ENCODE measurements at regions of chr3 and their contacts with region 1.

Region 1: GRCh38 chr3:50272911-50273693 is 4.2 kb downstream of the SEMA3B start:
- DNase-seq: peak; percentile 96
- ATAC-seq: peak; percentile 76

Region 2: DNA sequence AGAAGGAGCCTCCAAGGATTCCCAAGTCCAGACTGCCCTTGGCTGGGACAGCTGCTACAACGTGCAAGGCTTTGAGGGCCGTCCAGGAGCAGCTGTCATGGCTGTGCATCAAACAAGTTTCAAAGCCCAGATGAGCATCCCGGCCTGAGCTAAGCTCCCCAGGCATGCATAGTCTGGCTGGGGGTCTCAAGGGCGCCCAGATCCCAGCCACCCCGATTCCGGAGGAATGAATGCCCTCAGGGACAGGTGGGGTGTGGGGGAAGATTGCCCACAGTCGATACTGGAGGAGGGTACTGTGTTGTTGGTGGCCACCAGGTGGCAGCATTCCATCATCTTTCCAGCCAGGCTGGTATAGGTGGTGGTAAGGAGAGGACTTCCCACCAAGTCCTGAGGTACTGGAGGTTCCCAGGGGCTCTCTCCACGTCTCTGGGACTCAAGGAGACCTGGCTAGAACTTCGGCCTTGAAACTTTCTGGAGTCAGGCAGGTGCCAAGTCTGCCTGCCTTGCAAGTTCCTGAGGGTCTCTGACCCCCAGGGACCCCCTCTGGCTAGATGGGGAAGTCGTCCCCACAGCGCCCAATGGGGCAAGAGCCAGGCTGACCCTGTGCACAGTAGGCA is 151.6 kb before region 1 on chr3:
- intact Hi-C with region 1: loop called (anchors 5 kb)
- DNase-seq: no peak
- ATAC-seq: peak; percentile 86

Region 3: GRCh38 chr3:50194128-50194902 is 78.8 kb before region 1 on chr3:
- intact Hi-C with region 1: loop called (anchors 1 kb)
- DNase-seq: peak; percentile 73
- ATAC-seq: peak; percentile 76

Region 4: DNA sequence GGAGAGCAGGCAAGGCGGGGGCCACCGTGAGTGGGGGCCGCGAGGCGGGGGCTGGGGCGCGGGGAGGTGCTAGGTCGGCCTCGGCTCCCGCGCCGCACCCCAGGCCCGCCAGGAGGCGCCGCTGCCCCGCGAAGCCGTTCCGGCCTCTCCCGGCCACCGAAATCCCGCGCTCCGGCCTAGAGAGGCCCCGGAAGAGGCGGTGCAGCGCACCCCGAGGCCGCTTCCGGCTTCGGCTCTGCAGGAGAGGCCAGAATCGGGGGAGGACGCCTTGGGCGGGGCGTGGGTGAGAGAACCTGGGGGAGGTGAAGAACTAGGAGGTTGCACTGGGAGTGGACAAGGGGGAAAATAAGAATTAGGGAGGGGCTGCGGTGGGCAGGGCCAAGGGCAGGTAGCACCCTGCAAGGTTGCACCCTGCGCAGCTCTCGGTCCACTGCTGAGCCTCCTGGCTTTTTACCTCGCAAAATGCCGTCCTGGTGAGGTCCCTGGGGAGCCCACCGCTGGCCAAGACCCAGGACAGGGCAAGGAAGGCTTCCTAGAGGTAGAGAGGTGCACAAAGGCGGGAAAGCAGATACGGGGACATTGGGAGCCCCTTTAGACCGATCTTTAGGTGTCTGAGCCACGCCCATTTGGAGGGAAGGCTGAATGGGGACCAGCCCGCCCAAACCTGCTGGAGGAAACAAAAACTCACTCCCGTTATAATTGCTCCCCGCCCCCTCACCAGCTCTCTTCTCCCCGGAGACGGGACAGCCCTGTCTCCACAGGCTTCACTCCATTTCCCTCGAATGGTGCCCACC is 45.5 kb before region 1 on chr3:
- intact Hi-C with region 1: loop called (anchors 1 kb)
- DNase-seq: peak; percentile 97
- ATAC-seq: peak; percentile 94

Region 5: DNA sequence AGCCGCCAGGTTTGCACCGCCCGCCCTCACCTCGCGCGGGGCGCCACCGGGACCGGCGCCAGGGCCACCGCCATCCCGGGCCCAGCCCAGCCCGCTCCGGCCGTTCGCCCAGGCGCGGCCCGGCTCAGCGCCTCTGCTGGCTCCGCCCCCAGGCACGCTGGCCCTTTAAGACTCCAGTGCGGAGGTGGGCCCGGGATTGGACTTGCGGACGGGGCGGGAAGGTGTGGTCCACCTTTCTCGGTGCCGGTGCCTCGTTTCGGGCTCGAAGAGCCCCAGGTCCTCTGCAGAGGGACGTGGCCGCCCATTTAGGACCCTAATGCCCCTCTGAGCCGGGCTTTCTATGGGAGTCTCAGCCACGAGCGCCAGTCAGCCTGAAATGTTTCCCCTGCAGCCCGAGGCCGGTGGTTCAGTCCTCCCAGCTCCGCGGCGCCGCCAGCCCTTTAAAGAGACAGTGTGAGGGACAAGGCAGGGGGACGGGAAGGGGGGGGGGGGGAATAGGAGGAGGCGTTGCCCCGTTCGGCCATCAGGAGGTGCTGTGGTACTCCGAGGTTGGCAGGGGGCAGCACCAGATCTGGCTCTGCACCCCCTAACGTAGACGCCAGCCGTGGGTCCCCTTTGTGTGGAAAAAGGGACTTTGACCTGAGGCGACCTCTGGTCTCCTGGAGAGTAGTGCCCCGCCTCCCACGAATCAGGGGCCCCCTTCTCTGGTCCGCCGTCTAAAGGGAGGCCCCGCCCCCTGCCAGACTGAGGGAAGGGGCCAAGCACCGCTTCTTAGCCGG is 48.4 kb after region 1 on chr3:
- intact Hi-C with region 1: loop called (anchors 2 kb)
- DNase-seq: peak; percentile 96
- ATAC-seq: peak; percentile 84